AG04450 (cell line): ENCODE measurements at regions of chr1 and their contacts with region 1.

Region 1: GRCh38 chr1:171644805-171645483 is 7.5 kb downstream of the MYOC start:
- DNase-seq: peak; percentile 61
- H3K4me3 ChIP-seq: no peak overlapping the region
- H3K27ac ChIP-seq: no peak overlapping the region
- H3K27me3 ChIP-seq: no peaks in the 10 kb centered on the region
- CTCF ChIP-seq: peak; percentile 93

Region 2: GRCh38 chr1:171625225-171625624 is 19.7 kb before region 1 on chr1:
- CTCF ChIA-PET with region 1: interaction called, 16 read pairs
- POLR2A ChIA-PET with region 1: no interaction called
- DNase-seq: no peak
- H3K4me3 ChIP-seq: no peak overlapping the region
- H3K27ac ChIP-seq: no peak overlapping the region
- H3K27me3 ChIP-seq: peaks cover 2% of the 10 kb centered on the region
- CTCF ChIP-seq: no peak

Region 3: DNA sequence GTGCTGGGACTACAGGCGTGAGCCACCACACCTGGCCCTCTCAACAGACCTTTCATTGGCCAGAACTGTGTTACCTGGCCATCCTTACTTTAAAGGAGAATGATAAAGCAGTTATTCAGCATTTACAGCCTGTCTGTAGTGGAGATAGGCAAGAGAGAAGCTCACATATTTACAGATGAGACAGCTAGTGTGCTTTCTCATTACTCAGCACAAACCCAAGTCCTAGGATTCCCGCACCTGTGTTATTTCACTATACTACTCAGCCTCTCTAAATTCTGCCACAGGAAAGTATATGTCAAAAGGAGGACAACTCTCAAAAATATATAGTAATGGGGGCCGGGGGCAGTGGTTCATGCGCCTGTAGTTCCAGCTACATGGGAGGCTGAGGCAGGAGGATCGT is 23.4 kb after region 1 on chr1:
- CTCF ChIA-PET with region 1: interaction called, 16 read pairs
- POLR2A ChIA-PET with region 1: no interaction called
- DNase-seq: no peak
- H3K4me3 ChIP-seq: no peak overlapping the region
- H3K27ac ChIP-seq: no peak overlapping the region
- H3K27me3 ChIP-seq: peaks cover 2% of the 10 kb centered on the region
- CTCF ChIP-seq: no peak

Region 4: GRCh38 chr1:171781176-171781875 is 136.4 kb after region 1 on chr1 and contains the start of gene METTL13:
- CTCF ChIA-PET with region 1: interaction called, 11 read pairs
- POLR2A ChIA-PET with region 1: no interaction called
- DNase-seq: peak; percentile 98
- H3K4me3 ChIP-seq: peak within 1 kb of the TSS; percentile 99
- H3K27ac ChIP-seq: peak within 1 kb of the TSS; percentile 86
- H3K27me3 ChIP-seq: no peaks in the 10 kb centered on the region
- CTCF ChIP-seq: no peak
- polyA plus RNA-seq, gene METTL13: 32.0 and 32.9 TPM in 2 replicates

Region 5: DNA sequence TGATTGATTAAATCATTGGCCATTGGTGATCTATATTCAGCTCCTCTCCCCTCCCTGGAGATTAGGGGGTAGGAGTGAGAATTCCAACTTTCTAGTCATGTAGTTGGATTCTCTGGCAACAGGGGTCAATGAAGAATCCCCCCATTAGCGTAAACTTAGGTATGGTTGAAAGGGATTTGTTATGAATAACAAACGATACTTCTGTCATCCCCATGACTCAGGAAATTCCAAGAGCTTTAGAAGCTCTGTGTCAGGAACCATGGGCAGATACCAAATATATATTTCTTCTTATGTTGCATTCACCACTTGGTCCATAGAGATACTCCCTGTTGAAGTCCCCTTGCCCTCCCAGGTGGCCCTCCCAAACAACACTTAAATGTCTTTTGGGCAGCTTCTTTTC is 320.8 kb after region 1 on chr1:
- CTCF ChIA-PET with region 1: no interaction called
- POLR2A ChIA-PET with region 1: no interaction called
- DNase-seq: no peak
- H3K4me3 ChIP-seq: no peak overlapping the region
- H3K27ac ChIP-seq: no peak overlapping the region
- H3K27me3 ChIP-seq: no peaks in the 10 kb centered on the region
- CTCF ChIP-seq: no peak

Region 6: DNA sequence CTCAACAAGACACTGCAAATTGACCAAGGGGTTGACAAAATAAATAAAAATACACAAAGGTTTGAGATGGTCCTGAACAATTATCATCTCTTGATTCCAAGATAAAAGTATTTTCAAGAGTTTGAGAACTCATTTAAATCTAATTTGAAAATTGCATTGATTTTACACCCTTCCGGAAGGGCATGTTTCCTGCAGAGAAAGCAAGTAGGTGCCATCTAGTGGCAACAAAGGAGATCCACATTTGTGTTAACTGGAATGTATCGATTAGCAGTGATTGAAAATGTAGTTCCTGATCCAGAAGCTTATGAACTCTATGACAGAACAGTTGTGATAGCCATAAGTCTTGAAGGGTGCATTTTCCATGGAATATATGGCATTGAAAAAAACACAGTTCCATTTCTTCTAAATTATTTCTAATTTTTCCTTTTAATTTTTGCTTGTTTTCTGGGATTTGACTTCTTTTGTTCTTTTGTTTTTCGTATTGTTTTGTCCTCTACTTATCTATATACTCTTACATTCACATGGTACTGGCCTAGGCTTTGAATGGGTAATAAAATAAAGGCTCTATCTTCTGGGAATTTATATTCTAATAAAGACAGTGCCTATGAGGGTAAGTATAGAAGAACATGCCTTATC is 340.0 kb after region 1 on chr1:
- CTCF ChIA-PET with region 1: interaction called, 197 read pairs
- POLR2A ChIA-PET with region 1: no interaction called
- DNase-seq: no peak
- H3K4me3 ChIP-seq: no peak overlapping the region
- H3K27ac ChIP-seq: no peak overlapping the region
- H3K27me3 ChIP-seq: no peaks in the 10 kb centered on the region
- CTCF ChIP-seq: peak; percentile 89